ENCODE measurements at regions of chr2 and their contacts with region 1.

Region 1: GRCh38 chr2:33033606-33034081 is 86.9 kb downstream of the LTBP1 start:
- DNase-seq: peak; percentile 10
- H3K4me3 Mint-ChIP-seq: no peak overlapping the region
- H3K27ac Mint-ChIP-seq: no peak overlapping the region
- H3K4me1 Mint-ChIP-seq: no peaks in the 10 kb centered on the region
- H3K27me3 Mint-ChIP-seq: no peaks in the 10 kb centered on the region
- CTCF ChIP-seq: no peak

Region 2: GRCh38 chr2:31853521-31853920 is 1180.1 kb before region 1 on chr2:
- CTCF ChIA-PET with region 1: no interaction called
- intact Hi-C with region 1: no loop called
- DNase-seq: no peak
- H3K4me3 Mint-ChIP-seq: no peak overlapping the region
- H3K27ac Mint-ChIP-seq: no peak overlapping the region
- H3K4me1 Mint-ChIP-seq: no peaks in the 10 kb centered on the region
- H3K27me3 Mint-ChIP-seq: no peaks in the 10 kb centered on the region
- CTCF ChIP-seq: no peak

Region 3: DNA sequence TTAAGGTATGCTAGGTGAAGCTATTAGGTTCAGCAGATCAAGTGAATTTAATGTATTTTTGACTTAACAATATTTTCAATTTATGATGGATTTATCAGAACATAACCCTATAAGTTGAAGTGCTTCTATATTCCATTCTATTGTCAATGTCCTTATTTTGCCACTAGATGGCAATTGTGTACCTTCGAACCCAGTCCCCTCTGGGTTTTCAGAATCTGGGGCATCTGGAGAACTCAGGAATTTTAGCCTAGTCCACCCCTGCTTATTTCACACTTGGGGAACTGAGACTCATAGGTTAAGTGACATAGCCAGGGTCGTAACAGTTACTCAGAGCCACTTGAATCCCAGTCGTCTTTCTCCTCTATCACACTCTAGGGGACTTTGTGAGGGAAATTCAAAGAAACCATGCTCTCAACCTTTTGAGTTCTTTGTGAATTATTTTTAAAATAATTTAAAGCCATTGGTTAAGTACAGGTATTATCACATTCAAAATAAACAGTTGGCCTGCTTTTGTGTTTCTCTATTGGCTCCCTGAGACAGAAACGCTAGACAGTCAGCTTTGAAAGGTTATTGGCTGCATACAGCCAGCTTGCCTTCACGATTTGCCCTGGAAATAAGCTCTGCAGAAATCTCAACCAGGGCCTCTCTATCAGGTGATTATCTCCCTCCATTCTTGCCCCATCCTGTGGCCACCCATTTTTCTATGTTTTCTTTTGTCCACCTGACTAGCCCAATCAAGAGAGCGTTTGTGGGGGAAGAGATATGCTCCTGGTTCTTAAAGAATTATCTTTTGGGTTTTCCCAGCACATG is 260.8 kb before region 1 on chr2:
- CTCF ChIA-PET with region 1: interaction called, 8 read pairs
- intact Hi-C with region 1: loop called (anchors 1 kb)
- DNase-seq: peak; percentile 6
- H3K4me3 Mint-ChIP-seq: no peak overlapping the region
- H3K27ac Mint-ChIP-seq: no peak overlapping the region
- H3K4me1 Mint-ChIP-seq: no peaks in the 10 kb centered on the region
- H3K27me3 Mint-ChIP-seq: no peaks in the 10 kb centered on the region
- CTCF ChIP-seq: peak; percentile 74

Region 4: GRCh38 chr2:33086400-33087015 is 52.9 kb after region 1 on chr2:
- CTCF ChIA-PET with region 1: interaction called, 9 read pairs
- intact Hi-C with region 1: loop called (anchors 1 kb)
- DNase-seq: peak; percentile 36
- H3K4me3 Mint-ChIP-seq: no peak overlapping the region
- H3K27ac Mint-ChIP-seq: peak overlapping the region; percentile 30
- H3K4me1 Mint-ChIP-seq: peaks cover 17% of the 10 kb centered on the region
- H3K27me3 Mint-ChIP-seq: no peaks in the 10 kb centered on the region
- CTCF ChIP-seq: peak; percentile 32

Region 5: DNA sequence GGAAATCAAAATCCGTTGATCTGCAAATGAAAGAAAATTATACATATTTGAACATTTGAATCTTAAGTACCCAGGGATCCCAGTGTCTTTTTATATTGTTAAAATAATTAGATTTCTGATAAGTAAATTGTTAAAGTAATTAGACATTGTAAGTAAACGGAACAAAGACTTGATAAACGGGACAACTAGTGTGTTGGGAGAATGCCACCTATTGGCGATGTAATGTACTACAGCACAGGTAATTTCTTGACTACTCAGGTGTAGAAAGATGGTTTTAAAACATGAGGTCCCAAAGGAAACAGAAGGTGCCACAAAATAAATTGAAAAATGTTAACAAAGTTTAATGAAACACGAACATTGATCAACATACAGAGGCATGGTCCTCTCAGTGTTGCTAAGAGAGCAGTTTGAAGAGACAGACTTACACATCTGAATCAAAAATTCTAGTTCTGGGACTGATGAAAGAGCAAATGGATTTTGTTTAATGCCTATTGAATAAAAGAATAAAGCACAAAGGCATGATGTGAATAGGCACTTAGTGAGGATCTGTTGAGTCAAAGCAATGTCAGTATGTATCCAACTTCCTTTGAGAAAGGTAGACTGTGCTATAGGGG is 339.4 kb after region 1 on chr2:
- CTCF ChIA-PET with region 1: interaction called, 3 read pairs
- intact Hi-C with region 1: loop called (anchors 1 kb)
- DNase-seq: peak; percentile 49
- H3K4me3 Mint-ChIP-seq: no peak overlapping the region
- H3K27ac Mint-ChIP-seq: no peak overlapping the region
- H3K4me1 Mint-ChIP-seq: no peaks in the 10 kb centered on the region
- H3K27me3 Mint-ChIP-seq: no peaks in the 10 kb centered on the region
- CTCF ChIP-seq: peak; percentile 61